HEK293 (cell line): ENCODE measurements at regions of chr10 and their contacts with region 1.

Region 1: GRCh38 chr10:96366502-96366901 is 7.7 kb upstream of the OPALIN start:
- H3K4me3 ChIP-seq: no peak overlapping the region
- H3K27ac ChIP-seq: no peak overlapping the region
- H3K4me1 ChIP-seq: no peaks in the 10 kb centered on the region
- CTCF ChIP-seq: no peak

Region 2: GRCh38 chr10:96339957-96340904 is 26.3 kb before region 1 on chr10:
- CTCF ChIA-PET with region 1: interaction called, 20 read pairs
- POLR2A ChIA-PET with region 1: no interaction called
- H3K4me3 ChIP-seq: no peak overlapping the region
- H3K27ac ChIP-seq: no peak overlapping the region
- H3K4me1 ChIP-seq: no peaks in the 10 kb centered on the region
- CTCF ChIP-seq: peak; percentile 52; the same call in 1 of the 2 replicates

Region 3: GRCh38 chr10:96446966-96447596 is 80.6 kb after region 1 on chr10:
- CTCF ChIA-PET with region 1: no interaction called
- POLR2A ChIA-PET with region 1: no interaction called
- H3K4me3 ChIP-seq: no peak overlapping the region
- H3K27ac ChIP-seq: no peak overlapping the region
- H3K4me1 ChIP-seq: no peaks in the 10 kb centered on the region
- CTCF ChIP-seq: no peak